ENCODE measurements at regions of chr2 and their contacts with region 1.

Region 1: GRCh38 chr2:190180313-190181122 is 118.0 kb upstream of the MSTN start:
- DNase-seq: peak; percentile 83
- CTCF ChIP-seq: peak; percentile 71

Region 2: GRCh38 chr2:190088917-190089316 is 91.6 kb before region 1 on chr2:
- CTCF ChIA-PET with region 1: interaction called, 13 read pairs
- POLR2A ChIA-PET with region 1: no interaction called
- DNase-seq: peak; percentile 50
- CTCF ChIP-seq: peak; percentile 56

Region 3: DNA sequence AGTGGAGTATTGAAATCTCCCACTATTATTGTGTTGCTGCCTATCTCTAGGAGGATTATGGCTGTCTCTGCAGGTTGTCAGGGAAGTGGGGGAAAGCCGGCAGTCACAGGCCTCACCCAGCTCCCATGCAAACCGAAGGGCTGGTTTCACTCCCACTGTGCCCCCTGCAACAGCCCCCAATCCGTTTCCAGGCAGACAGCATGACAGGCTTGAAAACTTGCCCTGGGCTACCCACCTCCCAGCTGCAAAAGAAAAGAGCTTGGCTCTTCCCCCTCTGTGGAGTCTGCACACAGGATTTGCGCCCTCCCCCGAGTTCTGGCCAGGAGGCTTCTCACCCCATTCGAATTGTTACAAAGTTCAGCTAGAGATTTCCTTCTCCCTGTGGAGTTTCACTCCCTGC is 30.6 kb before region 1 on chr2:
- CTCF ChIA-PET with region 1: interaction called, 12 read pairs
- POLR2A ChIA-PET with region 1: no interaction called
- DNase-seq: no peak
- CTCF ChIP-seq: no peak

Region 4: GRCh38 chr2:190159453-190159852 is 21.1 kb before region 1 on chr2:
- CTCF ChIA-PET with region 1: interaction called, 11 read pairs
- POLR2A ChIA-PET with region 1: no interaction called
- DNase-seq: no peak
- CTCF ChIP-seq: no peak

Region 5: DNA sequence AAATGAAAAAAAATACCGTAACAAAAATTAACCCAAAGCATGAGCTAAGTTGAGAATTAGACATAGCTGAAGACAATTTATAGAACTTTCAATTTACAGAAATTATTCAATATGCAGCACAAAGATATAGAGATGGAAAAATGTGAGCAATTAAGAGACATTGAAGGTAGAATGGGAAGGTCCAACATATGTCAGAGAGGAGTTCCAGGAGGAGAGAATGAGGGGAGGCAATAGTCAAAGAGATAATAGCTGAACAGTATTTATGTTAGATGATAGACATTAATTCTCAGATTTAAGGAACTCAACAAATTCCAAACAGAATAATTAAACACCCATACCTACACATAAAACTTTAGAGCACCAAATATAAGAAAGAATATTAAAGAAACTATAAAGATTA is 15.0 kb before region 1 on chr2:
- CTCF ChIA-PET with region 1: interaction called, 49 read pairs
- POLR2A ChIA-PET with region 1: no interaction called
- DNase-seq: no peak
- CTCF ChIP-seq: no peak

Region 6: GRCh38 chr2:190197143-190197720 is 16.7 kb after region 1 on chr2:
- CTCF ChIA-PET with region 1: interaction called, 49 read pairs
- POLR2A ChIA-PET with region 1: no interaction called
- DNase-seq: no peak
- CTCF ChIP-seq: no peak